ENCODE measurements at regions of chr7 and their contacts with region 1.

Region 1: DNA sequence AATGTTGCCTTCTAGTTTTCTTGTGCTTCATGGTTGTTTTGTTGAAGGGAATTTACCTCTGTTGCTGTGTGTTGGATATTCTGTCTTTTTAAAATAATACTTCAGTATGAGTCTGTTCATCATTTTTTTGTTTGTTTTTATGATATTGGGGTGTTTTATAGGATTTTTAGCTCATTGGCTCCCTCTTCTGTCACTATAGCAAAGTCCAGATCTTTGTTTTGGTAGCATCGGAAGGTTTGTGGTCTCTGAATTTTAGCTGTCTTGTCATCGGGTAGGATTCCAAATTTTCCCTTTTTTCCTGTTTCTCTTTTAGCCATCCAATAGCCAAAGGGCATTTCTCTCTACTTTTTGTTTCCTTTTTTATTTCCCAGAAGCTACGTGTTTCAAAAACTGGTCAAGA is 91.4 kb downstream of the EXOC4 start:
- DNase-seq: no peak
- H3K4me3 ChIP-seq: no peak overlapping the region
- CTCF ChIP-seq: peak; percentile 36

Region 2: DNA sequence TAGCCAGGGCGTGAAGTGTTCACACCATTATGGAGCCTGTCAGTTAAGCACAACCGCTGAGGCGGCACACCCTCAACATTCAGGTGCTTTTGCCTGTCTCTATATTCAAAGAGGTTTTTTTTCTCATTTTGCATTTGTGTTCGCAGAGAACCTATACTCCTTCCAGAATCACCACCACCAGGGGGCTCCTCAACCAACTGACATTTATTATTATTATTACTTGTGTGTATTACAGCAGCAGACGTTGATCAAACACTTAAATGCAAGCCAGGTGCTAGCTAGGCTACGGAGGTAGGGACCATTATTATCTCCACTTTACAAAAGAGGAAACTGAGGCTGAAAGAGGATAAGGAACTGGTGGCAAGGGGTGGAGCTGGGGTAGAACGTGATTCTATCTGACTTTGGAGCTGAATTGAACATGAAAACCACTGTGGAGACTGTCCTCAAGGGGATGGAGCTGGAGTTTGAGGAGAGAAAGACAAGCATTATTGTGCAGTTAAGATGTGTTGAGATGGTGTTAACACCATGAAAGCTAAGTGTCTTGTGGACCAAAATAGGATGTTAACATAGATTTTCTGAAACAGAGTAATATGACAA is 634.2 kb before region 1 on chr7:
- CTCF ChIA-PET with region 1: interaction called, 14 read pairs
- POLR2A ChIA-PET with region 1: no interaction called
- DNase-seq: no peak
- H3K4me3 ChIP-seq: no peak overlapping the region
- CTCF ChIP-seq: peak; percentile 48

Region 3: GRCh38 chr7:133301444-133301843 is 42.8 kb before region 1 on chr7:
- CTCF ChIA-PET with region 1: no interaction called
- POLR2A ChIA-PET with region 1: no interaction called
- DNase-seq: no peak
- H3K4me3 ChIP-seq: no peak overlapping the region
- CTCF ChIP-seq: no peak

Region 4: GRCh38 chr7:133331861-133332260 is 12.4 kb before region 1 on chr7:
- CTCF ChIA-PET with region 1: interaction called, 14 read pairs
- POLR2A ChIA-PET with region 1: no interaction called
- DNase-seq: no peak
- H3K4me3 ChIP-seq: no peak overlapping the region
- CTCF ChIP-seq: no peak

Region 5: DNA sequence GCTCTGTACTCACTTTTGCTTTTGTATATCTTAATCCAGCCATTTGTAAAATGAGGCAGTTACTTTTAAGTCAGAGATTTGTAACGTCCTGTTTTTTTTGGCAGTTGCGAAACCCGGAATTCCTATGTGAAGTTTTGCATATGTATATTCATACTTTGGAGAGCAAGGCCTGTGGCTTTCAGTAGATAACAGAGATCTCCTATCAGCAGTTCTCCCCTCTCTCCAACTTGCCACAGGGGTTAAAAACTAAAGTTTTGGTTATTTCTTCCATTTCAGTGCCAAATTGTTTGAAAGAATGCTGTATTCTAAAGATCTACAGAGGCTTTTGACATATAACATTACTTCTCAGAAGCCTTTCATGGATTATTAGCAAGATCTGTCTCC is 11.0 kb after region 1 on chr7:
- CTCF ChIA-PET with region 1: interaction called, 19 read pairs
- POLR2A ChIA-PET with region 1: no interaction called
- DNase-seq: no peak
- H3K4me3 ChIP-seq: no peak overlapping the region
- CTCF ChIP-seq: no peak

Region 6: DNA sequence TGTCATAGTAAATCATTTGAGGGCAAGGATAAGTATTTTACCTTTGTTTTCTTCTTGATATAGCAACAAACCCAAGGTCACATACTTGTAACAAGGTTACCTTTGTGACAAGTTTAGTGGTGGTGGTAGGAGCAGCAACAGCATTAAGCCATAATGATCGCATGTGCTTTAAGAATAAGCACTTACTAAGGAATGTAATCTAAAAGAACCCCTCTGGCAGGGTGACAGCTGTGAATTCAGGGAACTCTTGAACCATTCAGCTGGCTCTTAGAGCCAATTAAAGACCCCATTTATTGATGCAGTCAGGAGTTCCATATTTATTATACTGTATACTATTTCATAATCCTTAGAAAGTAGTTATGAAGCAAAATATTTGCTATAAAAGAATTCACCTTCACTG is 279.4 kb after region 1 on chr7:
- CTCF ChIA-PET with region 1: no interaction called
- POLR2A ChIA-PET with region 1: no interaction called
- DNase-seq: no peak
- H3K4me3 ChIP-seq: no peak overlapping the region
- CTCF ChIP-seq: no peak